Prostate gland (tissue), 2 donors: ENCODE measurements at regions of chr21 and their contacts with region 1.

Region 1: GRCh38 chr21:16046625-16047340 is 317.0 kb downstream of the USP25 start:
- DNase-seq: no peak
- H3K4me3 ChIP-seq: no peak overlapping the region
- H3K27ac ChIP-seq: no peak overlapping the region
- H3K4me1 ChIP-seq: no peaks in the 10 kb centered on the region
- H3K27me3 ChIP-seq: no peaks in the 10 kb centered on the region
- CTCF ChIP-seq: no peak
- POLR2A ChIP-seq: no peak

Region 2: DNA sequence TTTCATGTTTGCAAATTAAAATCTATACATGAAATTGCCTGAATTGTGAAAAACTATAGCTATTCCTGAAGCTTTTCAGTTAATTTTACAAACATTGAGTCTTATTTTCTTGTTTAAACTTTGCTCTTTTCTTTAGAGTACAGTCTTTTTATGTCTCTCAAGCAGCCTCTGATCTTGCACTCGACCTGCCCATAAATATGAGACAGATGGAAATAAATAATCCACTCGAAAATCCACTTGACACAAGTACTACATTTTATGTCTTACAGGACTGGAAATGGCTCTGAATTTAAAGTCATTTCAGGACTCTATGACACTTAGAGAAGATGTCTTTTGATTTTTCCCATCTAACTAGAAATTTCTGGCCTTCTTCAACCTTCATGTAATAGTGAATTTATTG is 33.2 kb before region 1 on chr21:
- intact Hi-C with region 1: loop called (anchors 2 kb)
- DNase-seq: no peak
- H3K4me3 ChIP-seq: no peak overlapping the region
- H3K27ac ChIP-seq: peak overlapping the region; percentile 30 to 50
- H3K4me1 ChIP-seq: no peaks in the 10 kb centered on the region
- H3K27me3 ChIP-seq: no peaks in the 10 kb centered on the region
- CTCF ChIP-seq: no peak
- POLR2A ChIP-seq: no peak